CD8-positive, alpha-beta T cell (primary cell): ENCODE measurements at regions of chr3 and their contacts with region 1.

Region 1: GRCh38 chr3:155805802-155806618 is at the start of gene C3orf33:
- DNase-seq: peak; percentile 53 to 88 (median 74)
- ATAC-seq: peak; percentile 95
- H3K4me3 ChIP-seq: peak within 1 kb of the TSS; percentile 87 to 89
- H3K4me3 Mint-ChIP-seq: peak within 1 kb of the TSS; percentile 85
- H3K27ac ChIP-seq: peak within 1 kb of the TSS; percentile 64 to 82
- H3K27ac Mint-ChIP-seq: peak within 1 kb of the TSS; percentile 87
- H3K4me1 ChIP-seq: peaks cover 14% of the 10 kb centered on the region
- H3K4me1 Mint-ChIP-seq: peaks cover 24% of the 10 kb centered on the region
- H3K27me3 ChIP-seq: peaks cover 0 to 3% of the 10 kb centered on the region in 2 experiments
- H3K27me3 Mint-ChIP-seq: peaks cover 11% of the 10 kb centered on the region
- CTCF ChIP-seq: peak; percentile 93
- total RNA-seq, gene C3orf33: 4.6 to 4.7 TPM

Region 2: DNA sequence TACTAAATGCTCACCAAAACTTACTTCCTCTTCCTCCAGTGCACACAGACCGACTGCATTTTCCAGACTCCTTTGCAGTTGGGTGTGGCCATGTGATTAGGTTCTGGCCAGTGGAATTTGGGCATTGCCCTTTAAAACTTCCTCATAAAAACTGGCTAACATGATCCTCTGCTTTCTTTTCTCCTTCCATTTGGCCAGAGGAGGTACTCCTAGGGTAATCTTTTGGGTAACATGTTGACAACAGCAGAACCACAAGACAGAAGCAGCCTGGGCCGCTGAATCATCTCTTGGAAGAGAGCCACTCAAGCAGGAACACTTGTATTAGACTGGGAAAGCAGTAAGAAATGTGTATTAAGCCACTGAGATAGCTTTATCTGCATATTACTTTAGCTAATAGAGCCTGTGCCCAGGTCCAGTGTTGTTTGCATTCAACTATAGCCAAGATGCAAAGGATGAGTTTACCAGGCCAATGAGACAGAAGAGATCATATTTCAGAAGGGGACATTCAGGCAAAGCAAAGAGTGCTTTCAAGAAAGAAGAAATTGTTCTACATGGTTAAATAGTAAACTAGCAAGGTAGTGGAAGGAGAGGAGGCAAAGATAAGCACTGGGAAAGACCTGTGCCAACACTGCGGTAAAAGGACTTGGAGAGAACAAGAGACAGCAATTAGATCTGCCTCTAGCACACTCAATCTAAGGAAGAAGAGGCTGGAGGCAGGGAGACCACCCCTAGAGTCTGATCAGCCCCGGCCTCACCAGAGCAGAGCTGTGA is 140.9 kb before region 1 on chr3:
- CTCF ChIA-PET with region 1: no interaction called
- POLR2A ChIA-PET with region 1: no interaction called
- intact Hi-C with region 1: no loop called
- DNase-seq: no peak
- ATAC-seq: no peak
- H3K4me3 ChIP-seq: no peak overlapping the region
- H3K4me3 Mint-ChIP-seq: no peak overlapping the region
- H3K27ac ChIP-seq: no peak overlapping the region
- H3K27ac Mint-ChIP-seq: no peak overlapping the region
- H3K4me1 ChIP-seq: no peaks in the 10 kb centered on the region
- H3K4me1 Mint-ChIP-seq: no peaks in the 10 kb centered on the region
- H3K27me3 ChIP-seq: no peaks in the 10 kb centered on the region
- H3K27me3 Mint-ChIP-seq: no peaks in the 10 kb centered on the region
- CTCF ChIP-seq: no peak

Region 3: DNA sequence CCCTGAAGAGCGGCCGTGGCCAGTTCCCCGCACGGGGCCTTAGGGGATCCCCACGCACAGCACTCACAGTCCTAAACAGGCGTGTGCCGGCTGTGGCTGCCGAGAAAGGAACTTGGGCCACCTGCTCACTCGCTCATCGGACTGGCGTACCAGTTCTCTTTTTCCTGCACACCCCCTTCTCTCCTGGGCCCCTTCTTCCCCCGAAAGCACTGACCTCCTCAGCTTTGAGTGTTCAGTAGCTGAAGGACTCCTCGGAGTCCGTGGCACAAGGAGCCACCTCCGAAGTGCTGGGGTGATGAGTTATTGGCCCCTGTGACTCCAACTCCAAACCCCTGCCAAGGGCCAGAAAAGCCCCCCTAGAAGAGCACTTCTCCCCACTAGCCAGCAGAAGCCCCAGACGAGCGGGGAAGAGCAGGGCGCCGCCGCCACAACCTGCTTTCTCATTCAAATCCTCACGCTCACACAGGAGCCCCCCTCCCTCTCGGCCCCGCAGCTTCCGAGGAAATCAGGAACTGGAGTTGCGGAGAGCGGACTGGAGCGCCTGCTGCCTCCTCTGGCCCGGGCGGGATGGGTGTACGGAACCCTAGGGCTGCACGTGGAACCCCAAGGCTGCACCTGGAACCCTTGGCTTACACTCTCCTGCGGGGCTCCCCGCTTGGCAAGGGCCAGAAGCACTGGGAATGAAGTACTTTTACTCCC is 61.2 kb before region 1 on chr3 and contains the start of gene PLCH1:
- CTCF ChIA-PET with region 1: interaction called, 6 read pairs
- POLR2A ChIA-PET with region 1: no interaction called
- intact Hi-C with region 1: loop called in 1 of 2 experiments (anchors 5 kb)
- DNase-seq: peak in 7 of 9 experiments; percentile 3 to 57 (median 47)
- ATAC-seq: peak; percentile 75
- H3K4me3 ChIP-seq: peak within 1 kb of the TSS; percentile 60 to 80
- H3K4me3 Mint-ChIP-seq: peak within 1 kb of the TSS; percentile 86
- H3K27ac ChIP-seq: no peak within 1 kb of the TSS
- H3K27ac Mint-ChIP-seq: no peak within 1 kb of the TSS
- H3K4me1 ChIP-seq: peaks cover 19% of the 10 kb centered on the region
- H3K4me1 Mint-ChIP-seq: peaks cover 17% of the 10 kb centered on the region
- H3K27me3 ChIP-seq: peaks cover 0 to 17% of the 10 kb centered on the region in 2 experiments
- H3K27me3 Mint-ChIP-seq: peaks cover 39% of the 10 kb centered on the region
- CTCF ChIP-seq: no peak
- total RNA-seq, gene PLCH1: not detected

Region 4: DNA sequence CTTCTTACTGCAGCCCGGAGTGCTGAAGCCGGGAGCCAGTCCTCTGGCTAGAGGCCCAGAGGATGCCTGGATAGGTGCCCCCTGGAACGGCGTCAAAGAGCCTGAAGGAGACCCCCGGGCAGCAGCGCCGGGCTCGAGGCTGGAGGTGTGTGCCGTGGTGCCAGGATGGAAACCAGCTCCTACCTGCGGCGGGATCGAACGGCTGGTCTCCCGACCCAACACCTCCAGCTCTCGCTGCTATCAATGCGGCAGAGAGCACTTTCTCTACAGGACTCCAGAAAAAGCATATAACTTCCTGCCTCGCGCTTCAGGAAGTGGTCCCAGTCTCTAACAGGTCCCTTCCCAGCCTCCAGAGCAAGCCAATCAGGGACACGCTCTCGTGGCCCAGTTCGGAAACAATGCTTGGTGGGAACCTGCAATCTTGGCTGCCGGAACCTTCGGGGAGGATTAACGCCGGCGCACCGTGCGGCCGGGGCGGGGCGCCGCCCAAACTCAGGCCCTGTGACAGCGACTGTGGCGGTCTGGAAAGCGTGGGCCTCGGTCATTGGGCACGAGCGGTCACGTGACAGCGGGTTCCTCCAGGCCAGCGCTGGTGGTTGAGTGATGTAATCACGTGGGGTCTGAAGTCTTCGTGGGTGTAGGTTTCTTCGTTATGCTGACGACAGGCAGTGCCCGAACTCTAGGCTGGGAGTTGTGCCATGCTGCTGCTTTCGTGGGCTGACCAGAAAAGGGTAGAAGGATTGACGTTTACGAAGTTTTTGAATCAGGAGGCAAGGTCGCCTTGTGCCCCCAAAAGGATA is 48.3 kb after region 1 on chr3 and contains the start of gene SLC33A1:
- CTCF ChIA-PET with region 1: interaction called, 22 read pairs
- POLR2A ChIA-PET with region 1: interaction called, 20 read pairs
- intact Hi-C with region 1: loop called (anchors 1 to 2 kb)
- DNase-seq: peak; percentile 96 to 100 (median 99)
- ATAC-seq: peak; percentile 89
- H3K4me3 ChIP-seq: peak within 1 kb of the TSS; percentile 85 to 92
- H3K4me3 Mint-ChIP-seq: peak within 1 kb of the TSS; percentile 98
- H3K27ac ChIP-seq: peak within 1 kb of the TSS; percentile 90 to 95
- H3K27ac Mint-ChIP-seq: peak within 1 kb of the TSS; percentile 99
- H3K4me1 ChIP-seq: peaks cover 33% of the 10 kb centered on the region
- H3K4me1 Mint-ChIP-seq: peaks cover 39% of the 10 kb centered on the region
- H3K27me3 ChIP-seq: no peaks in the 10 kb centered on the region
- H3K27me3 Mint-ChIP-seq: no peaks in the 10 kb centered on the region
- CTCF ChIP-seq: no peak
- total RNA-seq, gene SLC33A1: 12.6 to 12.9 TPM